AG04450 (cell line): ENCODE measurements at regions of chr6 and their contacts with region 1.

Region 1: DNA sequence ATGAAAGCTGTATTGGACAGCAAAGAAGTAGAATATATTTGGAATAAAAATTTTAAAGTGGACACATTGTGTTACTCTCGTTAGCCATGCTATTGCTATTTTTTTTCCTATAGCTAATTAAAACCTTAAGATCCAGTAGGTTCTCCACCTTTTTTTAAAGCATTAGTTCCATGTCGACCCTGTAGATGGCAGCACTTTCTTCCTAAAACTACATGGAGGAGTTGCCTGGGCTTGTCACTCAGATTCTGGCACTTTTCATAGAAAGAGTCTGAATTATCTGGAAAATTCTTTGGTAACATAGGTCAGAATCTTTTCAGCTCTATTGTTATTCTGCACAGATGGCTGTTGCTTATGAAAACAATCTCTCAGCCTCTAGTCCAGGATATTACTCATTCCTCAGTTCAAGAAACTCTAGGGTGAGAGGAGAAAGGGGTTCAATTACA is 42.0 kb upstream of the ESR1 start:
- DNase-seq: peak; percentile 37
- H3K4me3 ChIP-seq: no peak overlapping the region
- H3K27ac ChIP-seq: no peak overlapping the region
- H3K27me3 ChIP-seq: no peaks in the 10 kb centered on the region
- CTCF ChIP-seq: peak; percentile 79

Region 2: GRCh38 chr6:151004415-151005024 is 760.9 kb before region 1 on chr6:
- CTCF ChIA-PET with region 1: no interaction called
- POLR2A ChIA-PET with region 1: no interaction called
- DNase-seq: peak; percentile 66
- H3K4me3 ChIP-seq: no peak overlapping the region
- H3K27ac ChIP-seq: peak overlapping the region; percentile 69
- H3K27me3 ChIP-seq: no peaks in the 10 kb centered on the region
- CTCF ChIP-seq: no peak

Region 3: GRCh38 chr6:151323791-151324487 is 441.5 kb before region 1 on chr6:
- CTCF ChIA-PET with region 1: no interaction called
- POLR2A ChIA-PET with region 1: no interaction called
- DNase-seq: peak; percentile 70
- H3K4me3 ChIP-seq: peak overlapping the region; percentile 14; the same call in 1 of the 2 replicates
- H3K27ac ChIP-seq: peak overlapping the region; percentile 47
- H3K27me3 ChIP-seq: no peaks in the 10 kb centered on the region
- CTCF ChIP-seq: peak; percentile 94

Region 4: GRCh38 chr6:152094992-152095592 is 329.6 kb after region 1 on chr6:
- CTCF ChIA-PET with region 1: interaction called, 10 read pairs
- POLR2A ChIA-PET with region 1: no interaction called
- DNase-seq: peak; percentile 98
- H3K4me3 ChIP-seq: no peak overlapping the region
- H3K27ac ChIP-seq: peak overlapping the region; percentile 89
- H3K27me3 ChIP-seq: no peaks in the 10 kb centered on the region
- CTCF ChIP-seq: no peak

Region 5: DNA sequence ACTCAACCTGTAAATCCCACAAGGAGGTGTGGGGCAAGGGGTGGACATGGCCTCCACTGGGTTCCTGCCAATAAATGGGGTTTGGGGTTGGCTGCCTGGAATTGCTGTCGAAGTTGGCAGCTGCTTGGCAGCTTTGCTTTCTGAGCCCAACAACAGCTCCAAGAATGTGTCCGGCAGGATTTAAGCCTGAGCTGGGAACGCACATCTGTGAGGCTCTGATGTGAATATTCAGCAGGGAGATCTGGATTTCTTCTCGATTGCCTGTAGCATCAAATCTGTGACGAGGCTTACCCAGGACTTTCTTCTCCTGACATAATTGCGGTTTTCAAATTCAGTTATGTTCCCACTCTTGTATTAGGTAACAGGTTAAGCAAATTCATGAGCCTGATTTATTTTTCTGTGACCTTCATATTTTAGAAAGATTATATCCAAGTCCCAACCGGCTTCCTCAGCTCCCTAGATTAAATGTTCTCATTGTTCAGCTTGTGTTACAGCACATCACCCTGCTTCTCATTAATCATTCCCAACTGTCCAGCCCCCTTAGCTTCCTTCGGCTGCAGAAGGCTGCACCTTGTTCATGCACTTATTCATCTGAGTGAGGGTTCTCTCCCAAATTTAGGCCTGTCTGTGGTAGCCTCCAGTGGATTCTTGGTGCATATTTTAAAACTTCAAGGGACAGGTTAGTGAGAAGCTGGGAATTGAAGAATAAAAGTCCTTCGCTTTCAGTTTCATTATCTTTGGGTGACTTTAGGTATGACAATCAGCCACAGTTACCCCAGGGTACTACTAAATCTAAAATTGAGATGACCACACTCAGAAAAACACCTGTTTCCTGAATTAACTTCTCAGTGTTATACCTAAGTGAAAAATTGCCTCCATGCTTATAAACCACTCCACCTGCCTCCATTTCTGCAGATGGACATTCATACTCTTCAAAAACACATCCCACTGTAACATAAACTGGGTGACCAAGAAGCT is 352.0 kb after region 1 on chr6:
- CTCF ChIA-PET with region 1: interaction called, 11 read pairs
- POLR2A ChIA-PET with region 1: no interaction called
- DNase-seq: no peak
- H3K4me3 ChIP-seq: no peak overlapping the region
- H3K27ac ChIP-seq: no peak overlapping the region
- H3K27me3 ChIP-seq: no peaks in the 10 kb centered on the region
- CTCF ChIP-seq: no peak

Region 6: GRCh38 chr6:152142105-152142504 is 376.6 kb after region 1 on chr6:
- CTCF ChIA-PET with region 1: interaction called, 10 read pairs
- POLR2A ChIA-PET with region 1: no interaction called
- DNase-seq: no peak
- H3K4me3 ChIP-seq: no peak overlapping the region
- H3K27ac ChIP-seq: no peak overlapping the region
- H3K27me3 ChIP-seq: no peaks in the 10 kb centered on the region
- CTCF ChIP-seq: no peak

Region 7: DNA sequence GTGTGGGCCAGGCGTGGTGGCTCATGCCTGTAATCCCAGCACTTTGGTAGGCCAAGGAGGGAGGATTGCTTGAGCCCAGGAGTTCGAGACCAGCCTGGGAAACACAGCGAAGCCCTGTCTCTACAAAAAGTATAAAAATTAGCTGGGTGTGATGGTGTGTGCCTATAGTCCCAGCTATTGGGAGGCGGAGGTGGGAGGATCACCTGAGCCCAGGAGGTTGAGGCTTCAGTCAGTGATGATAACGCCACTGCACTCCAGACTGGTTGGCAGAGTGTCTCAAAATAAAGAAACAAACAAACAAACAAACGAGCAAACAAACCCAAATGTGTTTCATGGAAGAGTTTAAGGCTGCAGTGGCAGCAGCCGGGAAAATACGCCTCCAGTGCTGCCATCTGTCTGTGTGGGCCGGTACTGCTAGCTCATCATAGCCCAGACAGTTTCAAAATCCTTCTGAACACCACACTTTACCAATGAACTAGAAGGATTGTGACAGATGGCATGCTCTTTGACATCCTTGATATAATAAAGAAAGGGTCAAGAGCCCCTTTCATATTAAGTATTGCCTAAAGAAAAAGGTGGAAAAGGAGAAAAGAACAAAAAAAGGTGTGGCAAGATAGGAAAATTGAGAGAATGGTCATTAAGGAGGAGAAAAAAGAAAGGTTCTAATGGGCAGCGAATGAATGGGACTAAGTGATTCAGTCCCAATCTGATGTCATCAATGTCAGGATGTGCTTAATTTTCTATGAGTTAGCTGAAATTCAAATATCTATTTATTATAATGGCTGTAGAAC is 573.1 kb after region 1 on chr6:
- CTCF ChIA-PET with region 1: interaction called, 11 read pairs
- POLR2A ChIA-PET with region 1: no interaction called
- DNase-seq: no peak
- H3K4me3 ChIP-seq: no peak overlapping the region
- H3K27ac ChIP-seq: no peak overlapping the region
- H3K27me3 ChIP-seq: no peaks in the 10 kb centered on the region
- CTCF ChIP-seq: peak; percentile 96